ENCODE measurements at regions of chr3 and their contacts with region 1.

Region 1: GRCh38 chr3:42247576-42248027 is 18.4 kb downstream of the CCK start:
- DNase-seq: no peak

Region 2: GRCh38 chr3:42443819-42444436 is 196.3 kb after region 1 on chr3:
- intact Hi-C with region 1: loop called (anchors 5 kb)
- DNase-seq: peak; percentile 94

Measured in posterior vena cava (tissue), 2 donors.